H1 (cell line): ENCODE measurements at regions of chrX and their contacts with region 1.

Region 1: GRCh38 chrX:152601848-152602612 is 35.7 kb upstream of the GABRQ start:
- DNase-seq: peak in 1 of 2 experiments; percentile 47
- H3K4me3 ChIP-seq: no peak overlapping the region
- H3K27ac ChIP-seq: no peak overlapping the region
- H3K4me1 ChIP-seq: no peaks in the 10 kb centered on the region
- H3K27me3 ChIP-seq: no peaks in the 10 kb centered on the region
- CTCF ChIP-seq: peak; percentile 15 to 44 (median 37); a peak in 3 of 4 replicates
- EP300 ChIP-seq: no peak
- POLR2A ChIP-seq: no peak
- RAD21 ChIP-seq: peak; percentile 38 to 50

Region 2: DNA sequence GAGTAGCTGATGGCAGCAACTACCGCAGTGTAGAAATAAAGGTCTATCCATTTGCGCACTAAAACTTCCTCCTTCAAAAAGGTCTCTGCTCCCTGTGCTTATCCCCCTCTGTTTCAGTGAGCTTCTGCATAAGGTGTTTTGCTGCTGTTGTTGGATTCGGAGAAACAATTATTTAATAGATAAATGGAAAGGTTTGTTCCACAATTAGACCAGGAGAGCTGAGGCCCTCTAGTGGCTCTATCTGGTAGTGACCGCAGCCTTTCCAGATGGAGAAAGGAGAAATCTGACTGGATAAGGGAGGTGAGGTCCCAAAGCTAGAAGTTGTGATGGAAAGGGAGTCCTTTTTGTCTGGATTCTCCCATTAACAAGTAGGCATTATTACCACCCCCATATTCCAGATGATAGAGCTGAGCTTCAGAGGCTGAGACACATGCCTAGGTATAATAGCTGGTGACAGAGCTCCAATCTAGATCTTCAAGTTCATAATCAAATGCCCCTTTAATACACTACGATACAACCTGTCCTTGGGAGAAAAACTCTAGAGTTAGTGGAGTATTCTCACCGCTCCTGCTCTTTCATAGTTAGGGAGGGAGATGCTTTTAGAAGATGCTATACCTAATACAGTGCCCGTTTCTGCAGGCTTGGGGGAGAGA is 30.5 kb after region 1 on chrX:
- CTCF ChIA-PET with region 1: interaction called, 11 read pairs
- POLR2A ChIA-PET with region 1: no interaction called
- DNase-seq: peak in 1 of 2 experiments; percentile 80
- H3K4me3 ChIP-seq: no peak overlapping the region
- H3K27ac ChIP-seq: no peak overlapping the region
- H3K4me1 ChIP-seq: peaks cover 0 to 6% (median 2%) of the 10 kb centered on the region in 4 experiments; a peak in 2 of 7 replicates
- H3K27me3 ChIP-seq: no peaks in the 10 kb centered on the region
- CTCF ChIP-seq: peak in 2 of 3 experiments; percentile 52 to 64; a peak in 2 of 4 replicates
- EP300 ChIP-seq: no peak
- POLR2A ChIP-seq: no peak
- RAD21 ChIP-seq: peak; percentile 68 to 74